T-cell (primary cell): ENCODE measurements at regions of chr16 and their contacts with region 1.

Region 1: DNA sequence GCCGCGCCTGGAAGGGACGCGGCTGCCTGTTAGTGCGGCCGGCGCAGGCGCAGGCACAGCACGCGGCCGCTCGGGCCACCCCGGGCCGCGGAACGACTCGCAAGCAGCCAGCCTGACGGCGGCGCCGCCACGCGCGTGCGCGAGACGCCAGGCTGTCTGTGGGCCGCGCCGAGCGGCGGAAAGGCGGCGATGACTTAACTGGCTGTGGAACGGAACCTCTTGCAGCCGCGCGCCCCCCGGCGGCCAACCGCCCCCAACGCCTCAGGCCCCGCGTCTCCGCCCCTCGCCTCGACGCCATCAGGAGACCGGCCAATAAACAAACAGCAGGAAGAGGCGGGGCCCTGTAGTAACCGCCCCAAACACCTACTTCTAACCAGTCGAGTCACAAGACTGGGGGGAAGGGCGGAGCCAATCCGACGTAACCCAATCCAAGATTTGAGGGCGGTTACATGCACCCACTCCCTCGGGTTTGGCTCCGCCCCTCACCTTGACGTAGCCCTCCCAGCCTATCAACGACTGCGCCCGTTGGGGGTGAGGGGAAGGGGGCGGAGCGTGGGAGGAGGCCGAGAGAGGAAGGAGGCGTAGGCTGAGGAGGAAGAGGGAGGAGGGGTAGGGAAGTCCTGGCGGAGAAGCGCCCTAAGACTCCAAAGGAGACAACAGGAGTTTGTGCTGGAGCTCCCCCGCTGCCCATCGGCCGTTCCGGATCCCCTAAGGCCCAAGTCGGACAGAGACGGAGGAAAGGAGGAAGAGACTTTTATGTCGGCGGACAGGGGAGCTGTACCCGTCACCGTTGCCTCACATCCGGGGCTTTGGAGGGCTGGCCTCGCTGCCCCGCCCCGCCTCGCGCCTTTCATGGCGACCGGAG is at the start of gene FBRS:
- DNase-seq: peak; percentile 99 to 100 (median 100)
- ATAC-seq: peak; percentile 72 to 79 (median 73)
- H3K4me3 ChIP-seq: peak within 1 kb of the TSS; percentile 88 to 97
- H3K4me3 Mint-ChIP-seq: peak within 1 kb of the TSS; percentile 91 to 98 (median 95)
- H3K27ac ChIP-seq: peak within 1 kb of the TSS; percentile 99
- H3K27ac Mint-ChIP-seq: peak within 1 kb of the TSS; percentile 100
- H3K4me1 ChIP-seq: peaks cover 20 to 53% of the 10 kb centered on the region in 2 experiments
- H3K4me1 Mint-ChIP-seq: peaks cover 43 to 46% (median 46%) of the 10 kb centered on the region in 3 donors
- H3K27me3 ChIP-seq: no peaks in the 10 kb centered on the region
- H3K27me3 Mint-ChIP-seq: no peaks in the 10 kb centered on the region
- total RNA-seq, gene FBRS: 159 to 186 (median 167) TPM

Region 2: GRCh38 chr16:30692381-30693064 is 34.4 kb after region 1 on chr16:
- CTCF ChIA-PET with region 1: interaction called, 6 to 16 read pairs
- POLR2A ChIA-PET with region 1: interaction called in 1 of 2 experiments, 24 read pairs
- DNase-seq: no peak
- ATAC-seq: no peak
- H3K4me3 ChIP-seq: no peak overlapping the region
- H3K4me3 Mint-ChIP-seq: no peak overlapping the region
- H3K27ac ChIP-seq: no peak overlapping the region
- H3K27ac Mint-ChIP-seq: peak overlapping the region; percentile 34 to 53
- H3K4me1 ChIP-seq: peaks cover 2 to 14% of the 10 kb centered on the region in 2 experiments
- H3K4me1 Mint-ChIP-seq: peaks cover 16 to 19% (median 17%) of the 10 kb centered on the region in 3 donors
- H3K27me3 ChIP-seq: no peaks in the 10 kb centered on the region
- H3K27me3 Mint-ChIP-seq: no peaks in the 10 kb centered on the region

Region 3: DNA sequence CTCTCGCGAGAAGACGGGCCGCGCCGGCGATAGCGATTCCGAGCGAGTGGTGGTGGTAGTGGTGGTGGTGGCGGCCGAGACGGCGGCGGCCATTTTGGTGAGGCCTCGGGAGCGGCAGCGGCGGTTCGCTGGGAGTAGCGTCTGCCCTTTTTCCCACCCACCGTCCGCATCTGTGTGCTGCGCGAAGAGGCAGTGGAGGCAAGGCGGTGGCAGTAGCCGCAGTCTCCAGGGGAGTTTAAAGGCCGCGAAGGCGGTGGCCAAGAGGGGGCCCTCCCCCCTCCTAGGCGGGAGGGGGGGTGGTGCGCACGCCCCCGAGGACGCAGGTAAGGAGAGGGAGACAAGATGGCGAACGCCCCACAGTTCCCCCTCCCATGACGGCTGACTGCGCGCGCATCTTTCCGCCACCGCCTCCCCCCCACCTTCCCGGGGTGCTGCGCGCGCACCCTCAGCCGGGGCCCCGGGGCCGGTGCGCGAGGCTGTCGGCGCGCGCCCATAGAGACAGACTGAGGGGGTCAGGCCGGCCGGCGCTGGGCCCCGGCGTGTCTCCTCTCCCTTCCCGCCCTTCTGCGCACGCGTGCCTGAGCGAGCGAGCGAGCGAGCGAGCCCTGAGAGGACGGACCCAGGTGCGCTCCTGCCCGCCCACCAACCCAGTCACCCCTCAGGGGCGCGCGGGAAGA is 40.2 kb after region 1 on chr16:
- CTCF ChIA-PET with region 1: interaction called, 6 to 16 read pairs
- POLR2A ChIA-PET with region 1: interaction called in 1 of 2 experiments, 3 read pairs
- DNase-seq: peak; percentile 98 to 100 (median 99)
- ATAC-seq: peak; percentile 77 to 83 (median 80)
- H3K4me3 ChIP-seq: peak overlapping the region; percentile 82 to 95
- H3K4me3 Mint-ChIP-seq: peak overlapping the region; percentile 84 to 97 (median 92)
- H3K27ac ChIP-seq: peak overlapping the region; percentile 100
- H3K27ac Mint-ChIP-seq: peak overlapping the region; percentile 100
- H3K4me1 ChIP-seq: peaks cover 9 to 34% of the 10 kb centered on the region in 2 experiments
- H3K4me1 Mint-ChIP-seq: peaks cover 39 to 41% (median 39%) of the 10 kb centered on the region in 3 donors
- H3K27me3 ChIP-seq: no peaks in the 10 kb centered on the region
- H3K27me3 Mint-ChIP-seq: no peaks in the 10 kb centered on the region